ENCODE measurements at regions of chr15 and their contacts with region 1.

Region 1: GRCh38 chr15:44593042-44593736 is 56.2 kb downstream of the EIF3J start:
- DNase-seq: no peak
- ATAC-seq: no peak

Region 2: GRCh38 chr15:44738340-44738984 is 145.3 kb after region 1 on chr15:
- intact Hi-C with region 1: loop called (anchors 10 kb)
- DNase-seq: no peak
- ATAC-seq: peak; percentile 29